Calu3 (cell line): ENCODE measurements at regions of chr2 and their contacts with region 1.

Region 1: DNA sequence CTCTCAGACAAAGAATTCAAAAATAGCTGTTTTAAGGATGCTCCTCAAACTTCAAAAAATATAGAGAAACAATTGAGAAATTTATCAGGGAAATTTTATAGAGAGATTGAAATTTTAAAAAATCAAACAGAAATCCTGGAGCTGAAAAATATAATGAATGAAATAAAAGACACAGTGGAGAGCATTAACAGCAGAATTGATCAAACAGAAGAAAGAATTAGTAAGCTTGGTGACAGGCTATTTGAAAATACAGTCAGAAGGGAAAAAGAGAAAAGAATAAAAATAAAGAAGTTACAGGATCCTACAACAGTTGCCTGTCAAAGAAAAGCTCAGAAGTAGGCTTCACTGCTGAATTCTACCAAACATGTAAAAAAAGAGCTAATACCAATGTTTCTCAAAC is 293.8 kb upstream of the VWC2L start:
- DNase-seq: no peak
- H3K4me3 Mint-ChIP-seq: no peak overlapping the region
- H3K27ac Mint-ChIP-seq: no peak overlapping the region
- H3K4me1 Mint-ChIP-seq: no peaks in the 10 kb centered on the region
- H3K27me3 Mint-ChIP-seq: no peaks in the 10 kb centered on the region
- CTCF ChIP-seq: no peak

Region 2: GRCh38 chr2:214103276-214104001 is 13.6 kb before region 1 on chr2:
- CTCF ChIA-PET with region 1: no interaction called
- intact Hi-C with region 1: loop called (anchors 1 kb)
- DNase-seq: peak; percentile 67
- H3K4me3 Mint-ChIP-seq: peak overlapping the region; percentile 7
- H3K27ac Mint-ChIP-seq: peak overlapping the region; percentile 67
- H3K4me1 Mint-ChIP-seq: peaks cover 21% of the 10 kb centered on the region
- H3K27me3 Mint-ChIP-seq: no peaks in the 10 kb centered on the region
- CTCF ChIP-seq: no peak